ENCODE measurements at regions of chr1 and their contacts with region 1.

Region 1: GRCh38 chr1:2194898-2195673 is 514 bp upstream of the FAAP20 start:
- DNase-seq: peak; percentile 65 to 91
- H3K4me3 ChIP-seq: peak overlapping the region; percentile 58
- H3K4me1 ChIP-seq: peaks cover 18% of the 10 kb centered on the region
- H3K27me3 ChIP-seq: no peaks in the 10 kb centered on the region

Region 2: GRCh38 chr1:2108213-2108876 is 86.7 kb before region 1 on chr1:
- in situ Hi-C with region 1: no loop called
- DNase-seq: peak in 1 of 2 experiments; percentile 59
- H3K4me3 ChIP-seq: no peak overlapping the region
- H3K4me1 ChIP-seq: no peaks in the 10 kb centered on the region
- H3K27me3 ChIP-seq: no peaks in the 10 kb centered on the region

Region 3: DNA sequence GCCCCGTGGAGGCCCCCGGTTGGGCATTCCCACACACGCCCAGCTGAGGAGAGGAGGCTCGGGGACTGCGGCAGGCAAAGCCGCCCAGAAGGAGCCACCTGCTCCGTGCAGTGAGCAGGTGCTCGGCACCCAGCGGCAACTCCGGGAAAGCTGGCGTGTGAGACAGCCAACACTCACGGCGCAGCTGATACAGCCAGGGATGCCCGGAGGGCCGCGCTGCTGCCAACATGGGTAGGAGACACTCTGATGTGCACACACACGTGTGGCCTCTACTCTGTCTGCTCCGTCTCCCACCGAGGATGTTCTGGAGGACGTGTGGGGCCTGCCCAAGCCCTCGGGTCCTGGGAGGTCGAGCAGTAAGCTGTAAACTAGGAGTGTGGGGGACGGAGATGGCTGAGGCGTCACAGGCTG is 183.4 kb after region 1 on chr1:
- in situ Hi-C with region 1: loop called (anchors 5 kb)
- DNase-seq: peak in 1 of 2 experiments; percentile 6
- H3K4me3 ChIP-seq: no peak overlapping the region
- H3K4me1 ChIP-seq: no peaks in the 10 kb centered on the region
- H3K27me3 ChIP-seq: no peaks in the 10 kb centered on the region

Region 4: GRCh38 chr1:2786329-2787162 is 591.5 kb after region 1 on chr1:
- in situ Hi-C with region 1: loop called (anchors 25 kb)
- DNase-seq: peak in 1 of 2 experiments; percentile 77
- H3K4me3 ChIP-seq: no peak overlapping the region
- H3K4me1 ChIP-seq: peaks cover 4% of the 10 kb centered on the region; the same call in 1 of the 2 replicates
- H3K27me3 ChIP-seq: no peaks in the 10 kb centered on the region